Activated T-helper 1 cell treated with anti-CD3 and anti-CD28 coated beads, Interleukin-12 subunit alpha, Interleukin-12 subunit beta, Interleukin-2, Interleukin-4 antibody, amounts not matched to agents 30 ng/mL and 10 ng/mL and 1 ng/mL, durations not matched to agents 14 hours and 24 hours and 36 hours (primary cell): ENCODE measurements at regions of chr17 and their contacts with region 1.

Region 1: GRCh38 chr17:68356520-68356919 is 65.2 kb downstream of the ARSG start:
- DNase-seq: peak; percentile 75
- H3K4me3 Mint-ChIP-seq: peak overlapping the region; percentile 73
- H3K27ac Mint-ChIP-seq: peak overlapping the region; percentile 86
- H3K4me1 Mint-ChIP-seq: peaks cover 61% of the 10 kb centered on the region
- H3K27me3 Mint-ChIP-seq: no peaks in the 10 kb centered on the region

Region 2: DNA sequence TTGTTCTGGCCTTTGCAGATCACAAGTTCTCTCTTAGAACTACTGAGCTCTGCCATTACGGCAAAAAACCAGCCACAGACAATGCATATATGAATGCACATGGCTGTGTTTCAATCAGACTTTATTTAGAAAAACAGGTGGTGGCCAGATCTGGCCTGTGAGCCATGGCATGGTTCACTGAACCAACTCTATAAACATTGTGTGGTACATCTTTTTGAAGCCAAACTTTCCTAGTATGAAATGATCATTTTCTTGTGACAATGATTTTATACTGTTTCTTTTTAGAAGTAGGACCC is 174.6 kb before region 1 on chr17:
- intact Hi-C with region 1: no loop called
- DNase-seq: no peak
- H3K4me3 Mint-ChIP-seq: peak overlapping the region; percentile 12
- H3K27ac Mint-ChIP-seq: no peak overlapping the region
- H3K4me1 Mint-ChIP-seq: peaks cover 57% of the 10 kb centered on the region
- H3K27me3 Mint-ChIP-seq: peaks cover 8% of the 10 kb centered on the region

Region 3: GRCh38 chr17:68310152-68310551 is 46.4 kb before region 1 on chr17:
- intact Hi-C with region 1: loop called (anchors 1 kb)
- DNase-seq: peak; percentile 20
- H3K4me3 Mint-ChIP-seq: no peak overlapping the region
- H3K27ac Mint-ChIP-seq: no peak overlapping the region
- H3K4me1 Mint-ChIP-seq: peaks cover 32% of the 10 kb centered on the region
- H3K27me3 Mint-ChIP-seq: no peaks in the 10 kb centered on the region

Region 4: DNA sequence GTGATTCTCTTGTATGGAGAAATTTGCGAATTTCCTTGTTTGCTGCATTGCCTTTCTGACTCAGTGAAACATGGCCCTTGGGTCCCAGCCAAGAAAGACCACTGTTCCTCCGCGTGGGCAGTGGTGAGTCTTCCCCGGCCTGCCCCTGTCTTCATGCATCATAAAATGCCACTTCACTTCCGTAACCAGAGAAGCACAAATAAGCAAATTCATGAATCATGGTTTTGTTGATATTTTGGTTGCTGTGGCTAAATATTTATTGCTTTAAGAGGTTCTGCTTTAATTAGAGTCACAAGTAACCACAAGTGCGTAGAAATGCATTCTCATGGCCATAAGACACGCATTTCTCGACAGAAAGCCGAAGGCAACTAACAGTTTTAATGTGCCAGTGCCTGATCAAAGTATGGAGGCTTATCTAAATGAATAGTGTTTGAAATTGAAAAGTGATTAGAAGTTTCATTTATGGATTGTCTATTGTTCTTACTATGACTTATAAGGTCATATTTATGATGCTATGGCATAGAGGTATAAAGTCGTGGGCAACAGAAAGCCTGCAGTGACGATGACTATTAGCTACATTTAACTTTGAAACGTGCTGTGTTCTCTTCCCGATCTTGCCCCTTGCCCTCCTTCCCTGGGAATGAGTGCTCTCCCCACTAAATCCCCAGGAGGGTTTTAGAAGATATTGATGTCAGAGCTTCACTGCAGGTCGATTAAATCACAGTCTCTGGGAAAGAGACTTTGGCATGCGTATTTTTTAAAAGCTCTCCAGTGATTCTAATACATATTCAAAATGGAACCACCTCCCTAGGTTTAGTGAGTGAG is 24.8 kb after region 1 on chr17:
- intact Hi-C with region 1: loop called (anchors 1 kb)
- DNase-seq: no peak
- H3K4me3 Mint-ChIP-seq: no peak overlapping the region
- H3K27ac Mint-ChIP-seq: no peak overlapping the region
- H3K4me1 Mint-ChIP-seq: peaks cover 31% of the 10 kb centered on the region
- H3K27me3 Mint-ChIP-seq: peaks cover 8% of the 10 kb centered on the region

Region 5: DNA sequence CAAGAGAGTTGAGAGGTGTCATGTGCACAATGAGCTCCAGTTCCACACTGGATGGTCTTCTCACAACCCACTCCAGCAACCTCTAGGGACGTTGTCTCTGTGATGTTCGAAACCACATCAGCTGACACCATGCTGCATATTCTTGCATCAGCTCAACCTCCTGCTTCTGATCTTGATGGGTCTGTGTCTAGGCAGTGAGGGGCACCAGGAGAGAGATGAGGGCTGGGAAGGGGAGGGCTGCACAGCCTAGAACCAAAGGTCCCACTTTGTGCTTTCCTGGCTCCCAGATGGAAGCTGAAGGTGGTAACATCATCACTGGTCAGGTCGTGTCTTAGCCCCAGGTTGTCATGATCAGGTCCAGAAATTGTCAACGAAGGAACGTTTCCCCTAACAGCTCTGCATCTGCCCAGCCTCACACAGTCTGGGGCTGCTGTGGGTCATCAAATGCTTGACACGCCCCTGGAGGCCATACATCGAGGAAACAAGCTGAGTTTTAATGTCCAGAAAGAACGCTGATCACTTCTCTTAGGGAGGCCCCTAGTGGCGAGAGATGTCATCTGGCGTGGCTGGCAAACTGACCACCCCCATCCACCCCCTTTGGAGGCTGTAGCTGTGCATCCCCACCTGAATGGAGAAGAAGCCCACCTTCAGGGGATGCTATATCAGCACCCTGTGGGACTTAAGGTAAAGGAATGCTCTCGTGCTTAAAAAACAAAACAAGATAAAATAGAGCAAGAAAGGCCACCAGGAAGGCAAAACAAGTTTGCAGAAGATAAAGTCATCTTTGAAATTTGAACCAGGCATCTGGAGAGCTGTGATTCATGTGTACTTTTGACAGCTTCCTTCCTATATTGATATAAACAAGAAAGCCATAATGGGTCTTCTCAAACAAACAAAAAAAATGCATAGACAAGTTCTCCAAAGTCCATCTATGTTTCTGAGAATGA is 42.4 kb after region 1 on chr17:
- intact Hi-C with region 1: loop called (anchors 1 kb)
- DNase-seq: peak; percentile 9
- H3K4me3 Mint-ChIP-seq: peak overlapping the region; percentile 49
- H3K27ac Mint-ChIP-seq: peak overlapping the region; percentile 85
- H3K4me1 Mint-ChIP-seq: peaks cover 51% of the 10 kb centered on the region
- H3K27me3 Mint-ChIP-seq: no peaks in the 10 kb centered on the region

Region 6: DNA sequence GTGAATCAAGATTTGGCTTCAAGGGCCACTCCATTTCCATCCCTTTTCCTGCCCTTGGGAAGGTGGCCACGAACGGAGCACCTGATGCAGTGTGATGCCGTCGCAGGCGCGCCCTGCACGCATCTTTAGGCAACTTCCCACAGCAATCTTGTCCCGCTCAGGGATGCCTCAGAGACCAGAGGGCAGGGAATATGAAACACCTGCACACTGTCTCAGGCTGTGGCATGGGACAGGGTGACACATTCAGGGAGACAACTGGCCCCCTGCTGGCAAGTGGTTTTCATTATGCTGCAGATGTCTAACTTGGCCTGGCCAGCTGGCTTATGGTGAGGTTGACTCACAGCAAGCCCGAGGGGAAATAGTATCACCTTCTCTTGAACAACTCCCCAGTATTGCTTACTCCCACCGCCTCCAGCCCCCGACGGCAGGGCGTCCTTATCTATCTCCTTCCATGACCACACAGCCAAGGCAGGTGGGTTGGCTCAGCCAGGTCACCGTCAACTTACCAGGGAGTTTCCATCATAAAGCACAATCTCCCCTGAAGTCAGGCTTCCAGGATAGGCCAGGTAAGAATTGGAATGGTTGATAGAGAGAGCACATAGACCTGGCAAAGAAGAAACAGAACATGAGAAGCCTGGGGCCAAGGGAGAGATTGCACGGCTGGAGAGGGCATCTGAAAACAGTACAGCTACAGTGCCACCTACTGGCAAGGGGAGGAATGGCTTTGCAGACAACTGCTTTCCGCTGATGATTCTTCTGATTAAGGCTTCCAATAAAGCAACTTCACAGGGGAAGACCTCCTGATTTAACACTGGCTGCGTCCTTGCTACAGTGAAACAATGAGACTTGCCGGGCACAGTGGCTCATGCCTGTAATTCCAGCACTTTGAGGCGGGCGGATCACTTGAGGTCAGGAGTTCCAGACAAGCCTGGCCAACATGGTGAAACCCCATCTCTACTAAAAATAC is 79.6 kb after region 1 on chr17:
- intact Hi-C with region 1: loop called (anchors 1 kb)
- DNase-seq: peak; percentile 77
- H3K4me3 Mint-ChIP-seq: peak overlapping the region; percentile 64
- H3K27ac Mint-ChIP-seq: peak overlapping the region; percentile 91
- H3K4me1 Mint-ChIP-seq: peaks cover 64% of the 10 kb centered on the region
- H3K27me3 Mint-ChIP-seq: no peaks in the 10 kb centered on the region